Psoas muscle (tissue), 8 donors: ENCODE measurements at regions of chr20 and their contacts with region 1.

Region 1: GRCh38 chr20:6395695-6396094 is 272.9 kb upstream of the FERMT1 start:
- DNase-seq: no peak
- ATAC-seq: no peak
- H3K4me3 ChIP-seq: no peak overlapping the region
- H3K27ac ChIP-seq: no peak overlapping the region
- H3K4me1 ChIP-seq: no peaks in the 10 kb centered on the region
- H3K27me3 ChIP-seq: no peaks in the 10 kb centered on the region
- CTCF ChIP-seq: no peak

Region 2: DNA sequence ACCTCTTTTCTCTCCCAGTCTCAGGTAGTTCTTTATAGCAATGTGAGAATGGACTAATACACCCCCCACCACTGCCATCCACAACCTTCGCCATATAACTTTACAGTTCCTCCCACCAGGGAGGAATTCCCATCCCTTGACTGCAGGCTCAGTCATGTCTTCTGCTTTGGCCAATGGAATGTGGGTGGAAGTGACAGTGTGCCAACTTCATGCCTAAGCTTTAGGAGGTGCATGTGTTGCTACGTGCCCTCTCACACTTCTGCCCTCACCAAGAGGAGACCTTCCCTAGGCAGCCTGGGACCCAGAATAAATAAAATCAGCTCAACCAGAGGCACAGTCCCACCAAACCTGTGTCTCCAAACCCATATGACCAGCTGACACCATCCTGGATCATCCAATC is 308.8 kb before region 1 on chr20:
- intact Hi-C with region 1: no loop called
- DNase-seq: no peak
- ATAC-seq: no peak
- H3K4me3 ChIP-seq: no peak overlapping the region
- H3K27ac ChIP-seq: no peak overlapping the region
- H3K4me1 ChIP-seq: no peaks in the 10 kb centered on the region
- H3K27me3 ChIP-seq: no peaks in the 10 kb centered on the region
- CTCF ChIP-seq: no peak

Region 3: GRCh38 chr20:6184080-6184479 is 211.6 kb before region 1 on chr20:
- intact Hi-C with region 1: no loop called
- DNase-seq: no peak
- ATAC-seq: no peak
- H3K4me3 ChIP-seq: no peak overlapping the region
- H3K27ac ChIP-seq: no peak overlapping the region
- H3K4me1 ChIP-seq: no peaks in the 10 kb centered on the region
- H3K27me3 ChIP-seq: no peaks in the 10 kb centered on the region
- CTCF ChIP-seq: no peak

Region 4: DNA sequence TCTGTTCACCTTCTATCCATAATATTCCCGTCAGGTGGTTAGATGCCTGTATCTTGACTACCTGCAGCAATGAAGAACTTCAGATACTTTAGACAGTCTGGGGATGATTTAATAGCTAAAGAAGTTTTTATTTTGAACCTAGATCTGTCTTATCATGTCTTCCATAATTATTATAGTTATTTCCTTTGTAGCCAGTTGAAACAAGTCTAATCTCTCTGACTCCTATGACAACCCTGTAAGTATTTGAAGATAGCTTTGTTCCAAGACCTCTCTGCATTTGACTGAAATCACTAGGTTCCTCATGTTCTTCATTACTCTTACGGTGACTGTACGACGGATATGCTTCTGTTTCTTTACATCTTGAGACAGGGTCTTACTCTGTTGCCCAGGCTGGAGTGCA is 55.1 kb after region 1 on chr20:
- intact Hi-C with region 1: loop called in 1 of 2 experiments (anchors 10 kb)
- DNase-seq: no peak
- ATAC-seq: no peak
- H3K4me3 ChIP-seq: no peak overlapping the region
- H3K27ac ChIP-seq: no peak overlapping the region
- H3K4me1 ChIP-seq: no peaks in the 10 kb centered on the region
- H3K27me3 ChIP-seq: no peaks in the 10 kb centered on the region
- CTCF ChIP-seq: no peak